ENCODE measurements at regions of chr6 and their contacts with region 1.

Region 1: GRCh38 chr6:108592371-108593337 is 31.9 kb downstream of the FOXO3 start:
- DNase-seq: peak; percentile 76
- ATAC-seq: peak; percentile 85
- H3K4me3 ChIP-seq: no peak overlapping the region
- H3K27ac ChIP-seq: peak overlapping the region; percentile 77
- H3K4me1 ChIP-seq: peaks cover 56% of the 10 kb centered on the region
- H3K27me3 ChIP-seq: no peaks in the 10 kb centered on the region; a peak in 1 of 4 replicates
- CTCF ChIP-seq: no peak
- EP300 ChIP-seq: peak; percentile 71; a peak in 3 of 4 replicates
- POLR2A ChIP-seq: no peak
- RAD21 ChIP-seq: no peak

Region 2: DNA sequence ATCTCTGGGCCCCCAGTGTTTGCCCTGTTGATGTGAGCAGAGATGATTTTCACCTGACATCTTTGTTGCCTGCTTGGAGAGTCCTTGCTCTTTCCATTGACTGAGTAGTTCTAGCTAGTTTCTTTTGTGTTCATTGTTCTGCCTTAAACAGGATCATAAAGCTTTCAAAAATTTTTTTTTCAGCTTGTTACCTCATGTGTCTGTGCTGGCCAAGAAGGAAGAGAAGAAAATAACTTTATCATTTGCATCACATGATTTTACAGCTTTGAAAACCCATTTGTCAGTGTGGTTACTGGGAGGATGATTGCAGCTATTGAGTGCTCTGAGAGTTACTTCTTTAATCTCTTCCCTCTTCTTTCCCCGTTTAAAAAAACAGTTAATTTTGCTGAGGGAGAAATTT is 15.9 kb before region 1 on chr6:
- CTCF ChIA-PET with region 1: interaction called, 4 read pairs
- POLR2A ChIA-PET with region 1: interaction called, 6 read pairs
- RAD21 ChIA-PET with region 1: no interaction called
- SMC1A ChIA-PET with region 1: interaction called, 17 read pairs
- in situ Hi-C with region 1: no loop called
- intact Hi-C with region 1: no loop called
- DNase-seq: no peak
- ATAC-seq: no peak; the same call in 2 of the 3 replicates
- H3K4me3 ChIP-seq: no peak overlapping the region
- H3K27ac ChIP-seq: no peak overlapping the region
- H3K4me1 ChIP-seq: no peaks in the 10 kb centered on the region
- H3K27me3 ChIP-seq: no peaks in the 10 kb centered on the region
- CTCF ChIP-seq: no peak
- EP300 ChIP-seq: no peak
- POLR2A ChIP-seq: no peak
- RAD21 ChIP-seq: no peak

Region 3: DNA sequence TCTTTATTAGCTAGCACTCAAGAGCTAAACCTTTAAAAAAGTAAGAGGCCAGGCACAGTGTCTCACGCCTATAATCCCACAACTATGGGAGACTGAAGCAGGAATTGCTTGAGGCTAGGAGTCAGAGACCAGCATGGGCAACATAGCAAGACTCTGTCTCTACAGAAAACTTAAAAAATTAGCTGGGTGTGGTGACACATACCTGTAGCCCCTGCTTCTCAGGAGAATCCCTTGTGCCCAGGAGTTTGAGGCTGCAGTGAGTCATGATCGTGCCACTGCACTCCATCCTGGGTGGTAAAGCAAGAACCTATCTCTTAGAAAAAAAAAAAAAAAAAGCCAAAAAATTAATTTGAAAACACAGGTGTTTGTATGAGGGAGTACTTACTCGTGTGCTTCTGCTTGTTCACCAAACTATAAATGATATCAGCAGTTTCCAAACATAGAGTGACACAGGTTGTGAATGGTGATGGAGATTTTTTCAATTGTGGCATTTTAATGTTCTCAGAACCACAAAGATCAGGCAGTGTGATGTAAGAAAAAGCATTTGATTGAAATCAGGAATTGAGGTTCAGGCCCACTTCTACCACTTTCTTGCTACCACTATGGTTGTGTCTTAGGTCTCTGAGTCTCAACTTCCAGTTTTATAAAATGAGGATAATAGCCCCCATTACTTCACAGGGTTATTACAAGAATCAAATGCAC is 73.0 kb after region 1 on chr6:
- CTCF ChIA-PET with region 1: no interaction called
- POLR2A ChIA-PET with region 1: no interaction called
- RAD21 ChIA-PET with region 1: no interaction called
- SMC1A ChIA-PET with region 1: no interaction called
- in situ Hi-C with region 1: no loop called
- intact Hi-C with region 1: no loop called
- DNase-seq: no peak
- ATAC-seq: no peak
- H3K4me3 ChIP-seq: no peak overlapping the region
- H3K27ac ChIP-seq: no peak overlapping the region
- H3K4me1 ChIP-seq: no peaks in the 10 kb centered on the region
- H3K27me3 ChIP-seq: no peaks in the 10 kb centered on the region
- CTCF ChIP-seq: no peak
- EP300 ChIP-seq: no peak
- POLR2A ChIP-seq: no peak
- RAD21 ChIP-seq: no peak

Region 4: DNA sequence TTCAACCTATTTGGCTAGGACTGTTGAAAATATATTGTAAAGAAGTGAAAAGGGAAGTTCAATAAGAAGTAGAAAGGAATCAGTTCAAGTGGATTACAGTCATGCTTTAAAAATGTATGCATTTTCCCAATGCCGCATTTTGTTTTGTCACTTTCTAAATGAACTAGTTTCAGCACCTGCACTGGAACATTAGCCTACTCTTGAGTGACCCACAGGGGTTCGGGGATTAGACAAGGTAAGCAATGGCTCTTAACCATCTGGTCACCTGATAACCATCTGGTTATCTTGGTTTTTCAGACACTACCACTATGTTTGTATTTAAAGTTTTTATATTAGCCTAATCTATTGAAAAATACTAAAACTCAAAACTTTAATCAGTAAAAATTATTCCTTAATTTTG is 692.0 kb after region 1 on chr6:
- CTCF ChIA-PET with region 1: no interaction called
- POLR2A ChIA-PET with region 1: no interaction called
- RAD21 ChIA-PET with region 1: no interaction called
- SMC1A ChIA-PET with region 1: no interaction called
- in situ Hi-C with region 1: no loop called
- intact Hi-C with region 1: no loop called
- DNase-seq: no peak
- ATAC-seq: no peak
- H3K4me3 ChIP-seq: no peak overlapping the region
- H3K27ac ChIP-seq: no peak overlapping the region
- H3K4me1 ChIP-seq: no peaks in the 10 kb centered on the region
- H3K27me3 ChIP-seq: peaks cover 2 to 4% of the 10 kb centered on the region in 2 experiments; a peak in 3 of 4 replicates
- CTCF ChIP-seq: no peak
- EP300 ChIP-seq: no peak
- POLR2A ChIP-seq: no peak
- RAD21 ChIP-seq: no peak